ENCODE measurements at regions of chr10 and their contacts with region 1.

Region 1: GRCh38 chr10:67284589-67284988 is 358.8 kb downstream of the LRRTM3 start:
- DNase-seq: no peak
- H3K4me3 ChIP-seq: no peak overlapping the region
- H3K4me3 Mint-ChIP-seq: no peak overlapping the region
- H3K27ac Mint-ChIP-seq: no peak overlapping the region
- H3K4me1 ChIP-seq: peaks cover 46% of the 10 kb centered on the region
- H3K4me1 Mint-ChIP-seq: peaks cover 36% of the 10 kb centered on the region
- H3K27me3 ChIP-seq: no peaks in the 10 kb centered on the region
- H3K27me3 Mint-ChIP-seq: no peaks in the 10 kb centered on the region
- CTCF ChIP-seq: peak in 1 of 2 experiments; percentile 21

Region 2: GRCh38 chr10:66931340-66931948 is 353.1 kb before region 1 on chr10:
- CTCF ChIA-PET with region 1: no interaction called
- POLR2A ChIA-PET with region 1: no interaction called
- intact Hi-C with region 1: no loop called
- DNase-seq: peak in 1 of 2 experiments; percentile 64
- H3K4me3 ChIP-seq: no peak overlapping the region
- H3K4me3 Mint-ChIP-seq: no peak overlapping the region
- H3K27ac Mint-ChIP-seq: no peak overlapping the region
- H3K4me1 ChIP-seq: no peaks in the 10 kb centered on the region
- H3K4me1 Mint-ChIP-seq: no peaks in the 10 kb centered on the region
- H3K27me3 ChIP-seq: no peaks in the 10 kb centered on the region; the same call in 1 of the 2 replicates
- H3K27me3 Mint-ChIP-seq: peaks cover 24% of the 10 kb centered on the region
- CTCF ChIP-seq: peak; percentile 93 to 96

Region 3: GRCh38 chr10:67242528-67242927 is 42.1 kb before region 1 on chr10:
- CTCF ChIA-PET with region 1: no interaction called
- POLR2A ChIA-PET with region 1: no interaction called
- intact Hi-C with region 1: loop called (anchors 5 kb)
- DNase-seq: no peak
- H3K4me3 ChIP-seq: no peak overlapping the region
- H3K4me3 Mint-ChIP-seq: no peak overlapping the region
- H3K27ac Mint-ChIP-seq: no peak overlapping the region
- H3K4me1 ChIP-seq: peaks cover 14% of the 10 kb centered on the region; the same call in 1 of the 2 replicates
- H3K4me1 Mint-ChIP-seq: peaks cover 15% of the 10 kb centered on the region
- H3K27me3 ChIP-seq: no peaks in the 10 kb centered on the region
- H3K27me3 Mint-ChIP-seq: no peaks in the 10 kb centered on the region
- CTCF ChIP-seq: no peak

Measured in Caco-2 (cell line).